Mammary epithelial cell (primary cell): ENCODE measurements at regions of chr12 and their contacts with region 1.

Region 1: GRCh38 chr12:51951199-51951842 is at the start of gene ACVR1B:
- DNase-seq: peak; percentile 83
- H3K4me3 ChIP-seq: peak within 1 kb of the TSS; percentile 81 to 92 (median 84)
- H3K27ac ChIP-seq: peak within 1 kb of the TSS; percentile 68
- H3K4me1 ChIP-seq: peaks cover 31% of the 10 kb centered on the region
- H3K27me3 ChIP-seq: no peaks in the 10 kb centered on the region
- CTCF ChIP-seq: no peak
- total RNA-seq, gene ACVR1B: 13.7 to 19.6 TPM

Region 2: DNA sequence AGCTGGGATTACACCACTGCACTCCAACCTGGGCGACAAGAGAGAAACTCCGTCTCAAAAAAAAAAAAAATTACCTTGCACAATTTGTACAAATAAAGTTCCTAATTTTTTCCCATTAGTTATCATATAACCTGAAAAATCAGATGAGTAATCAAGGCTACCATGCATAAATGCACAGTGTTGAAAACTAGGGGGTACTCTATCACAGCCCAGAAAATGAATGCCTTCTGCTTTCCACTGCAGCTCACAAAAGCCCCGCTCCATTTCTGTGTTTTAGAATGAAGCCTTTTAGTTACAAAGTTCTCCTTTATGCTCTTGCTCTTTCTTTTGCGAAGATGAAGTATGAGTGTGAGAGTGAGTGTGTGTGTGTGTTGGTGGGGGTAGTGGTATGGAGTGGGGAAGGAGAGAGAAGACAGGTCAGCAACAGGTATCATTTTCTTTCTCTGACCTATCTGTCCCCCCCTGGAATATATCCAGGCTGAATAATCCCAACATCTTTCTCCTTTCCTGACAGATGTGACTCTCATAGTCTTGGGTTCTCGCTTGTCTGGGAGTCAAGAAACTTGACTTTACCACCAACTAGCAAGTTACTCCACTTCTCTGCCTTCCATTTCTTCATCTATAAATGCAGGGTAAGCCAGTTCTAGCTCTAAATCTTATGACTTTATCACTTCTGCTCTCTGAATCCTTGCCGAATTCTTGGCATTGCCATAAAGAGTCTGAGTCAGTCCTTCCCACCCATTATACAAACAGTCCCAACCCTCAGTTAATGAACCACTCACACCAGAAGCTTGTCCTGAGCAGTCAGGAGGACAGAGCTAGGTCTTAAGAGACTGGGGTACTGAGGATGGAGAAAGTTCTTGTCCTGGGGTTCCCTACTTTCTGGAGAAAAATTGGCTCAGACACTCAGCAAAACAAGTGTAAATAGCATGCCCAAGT is 643.4 kb before region 1 on chr12:
- CTCF ChIA-PET with region 1: no interaction called
- dilution Hi-C with region 1: no loop called
- in situ Hi-C with region 1: no loop called
- intact Hi-C with region 1: no loop called
- DNase-seq: peak; percentile 84
- H3K4me3 ChIP-seq: no peak overlapping the region
- H3K27ac ChIP-seq: no peak overlapping the region
- H3K4me1 ChIP-seq: peaks cover 11% of the 10 kb centered on the region
- H3K27me3 ChIP-seq: no peaks in the 10 kb centered on the region
- CTCF ChIP-seq: no peak

Region 3: DNA sequence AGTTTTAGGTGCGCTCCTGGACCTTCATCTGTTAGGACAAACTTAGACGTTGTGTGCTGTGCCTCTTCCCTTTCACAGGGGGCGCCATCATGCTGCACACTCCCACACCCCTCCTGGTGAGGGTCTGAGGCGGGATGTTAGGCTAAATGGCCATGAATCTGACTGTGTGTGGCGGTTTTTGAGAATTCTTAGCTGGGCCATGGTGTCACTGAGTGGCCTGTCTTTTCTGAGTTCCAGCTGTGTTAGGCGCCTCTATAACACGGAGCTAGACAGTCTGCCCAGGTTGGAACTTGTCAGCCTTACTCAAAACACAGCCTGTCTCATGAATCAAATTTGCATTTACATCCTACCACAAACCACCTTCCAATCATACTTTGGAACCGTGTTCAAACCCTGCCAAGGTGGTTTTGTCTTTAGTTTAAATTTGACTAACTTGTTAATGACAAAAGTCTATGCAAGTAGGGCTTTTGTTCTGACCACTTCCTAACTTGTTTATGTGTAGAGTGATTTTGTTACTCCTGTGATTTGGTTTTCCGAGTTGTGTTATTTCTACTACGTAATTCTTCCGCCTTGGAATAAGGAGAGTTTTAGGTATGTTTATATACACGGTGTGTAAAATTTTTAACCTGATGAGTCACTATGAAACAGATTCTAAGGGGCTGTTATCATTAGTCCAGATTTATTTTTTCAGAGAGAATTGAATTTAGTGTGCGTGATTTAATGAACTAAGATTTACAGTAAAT is 19.8 kb after region 1 on chr12:
- CTCF ChIA-PET with region 1: no interaction called
- dilution Hi-C with region 1: no loop called
- in situ Hi-C with region 1: no loop called
- intact Hi-C with region 1: loop called (anchors 1 kb)
- DNase-seq: peak; percentile 87
- H3K4me3 ChIP-seq: peak overlapping the region in 2 of 3 experiments; percentile 26 to 29
- H3K27ac ChIP-seq: peak overlapping the region; percentile 64
- H3K4me1 ChIP-seq: peaks cover 43% of the 10 kb centered on the region
- H3K27me3 ChIP-seq: no peaks in the 10 kb centered on the region
- CTCF ChIP-seq: peak; percentile 52 to 75

Region 4: GRCh38 chr12:51980051-51980808 is 28.9 kb after region 1 on chr12:
- CTCF ChIA-PET with region 1: no interaction called
- dilution Hi-C with region 1: no loop called
- in situ Hi-C with region 1: no loop called
- intact Hi-C with region 1: loop called (anchors 1 kb)
- DNase-seq: peak; percentile 44
- H3K4me3 ChIP-seq: no peak overlapping the region
- H3K27ac ChIP-seq: no peak overlapping the region
- H3K4me1 ChIP-seq: no peaks in the 10 kb centered on the region
- H3K27me3 ChIP-seq: no peaks in the 10 kb centered on the region
- CTCF ChIP-seq: peak; percentile 93 to 95